CD4-positive, alpha-beta memory T cell (primary cell): ENCODE measurements at regions of chr4 and their contacts with region 1.

Region 1: GRCh38 chr4:13627606-13628301 is at the start of gene BOD1L1:
- DNase-seq: peak; percentile 71 to 83 (median 78)
- H3K4me3 ChIP-seq: peak within 1 kb of the TSS; percentile 70 to 95
- H3K4me3 Mint-ChIP-seq: peak within 1 kb of the TSS; percentile 94 to 98 (median 97)
- H3K27ac ChIP-seq: peak within 1 kb of the TSS; percentile 81
- H3K27ac Mint-ChIP-seq: peak within 1 kb of the TSS; percentile 93 to 99 (median 98)
- H3K4me1 ChIP-seq: peaks cover 41% of the 10 kb centered on the region
- H3K4me1 Mint-ChIP-seq: peaks cover 30 to 57% (median 46%) of the 10 kb centered on the region in 4 donors
- H3K27me3 ChIP-seq: no peaks in the 10 kb centered on the region
- H3K27me3 Mint-ChIP-seq: no peaks in the 10 kb centered on the region
- total RNA-seq, gene BOD1L1: 67.8 to 72.3 TPM

Region 2: DNA sequence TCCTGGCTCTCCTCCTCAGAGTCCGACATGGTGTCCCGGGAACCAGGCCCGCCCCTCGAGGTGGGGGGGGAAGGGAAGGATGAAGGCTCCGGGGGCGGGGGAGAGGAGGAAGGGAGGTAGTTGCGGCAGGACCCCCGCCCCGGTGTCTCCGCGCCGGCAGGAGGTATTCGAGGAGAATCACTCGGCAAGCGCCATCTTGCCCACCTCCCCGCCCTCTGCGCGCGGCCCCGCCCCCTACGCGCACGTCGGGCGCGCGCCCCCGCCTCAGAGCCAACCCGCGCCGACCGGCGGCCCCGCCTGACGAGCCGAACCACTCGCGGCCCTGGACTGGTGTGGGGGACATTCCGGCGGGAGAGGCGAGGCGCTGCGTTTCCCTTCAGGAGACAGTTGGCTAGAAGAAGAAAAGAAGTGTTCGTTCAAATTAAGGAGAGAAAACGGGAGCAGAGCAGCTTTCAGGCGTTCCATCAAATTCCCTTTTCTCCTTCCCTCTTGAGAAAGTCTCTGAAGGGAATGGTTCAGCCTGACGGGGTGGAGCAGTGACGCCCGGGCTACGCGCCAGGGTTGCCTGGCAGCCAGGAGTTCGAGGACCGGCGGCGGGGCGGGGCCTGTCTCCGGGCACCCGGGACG is 143.5 kb before region 1 on chr4 and contains the start of gene RAB28:
- CTCF ChIA-PET with region 1: no interaction called
- POLR2A ChIA-PET with region 1: interaction called, 3 read pairs
- intact Hi-C with region 1: loop called (anchors 1 kb)
- DNase-seq: peak; percentile 95 to 97 (median 96)
- H3K4me3 ChIP-seq: peak within 1 kb of the TSS; percentile 77 to 81
- H3K4me3 Mint-ChIP-seq: peak within 1 kb of the TSS; percentile 73 to 96 (median 90)
- H3K27ac ChIP-seq: peak within 1 kb of the TSS; percentile 93
- H3K27ac Mint-ChIP-seq: peak within 1 kb of the TSS; percentile 85 to 99 (median 99)
- H3K4me1 ChIP-seq: peaks cover 19% of the 10 kb centered on the region
- H3K4me1 Mint-ChIP-seq: peaks cover 14 to 27% (median 22%) of the 10 kb centered on the region in 4 donors
- H3K27me3 ChIP-seq: no peaks in the 10 kb centered on the region
- H3K27me3 Mint-ChIP-seq: peaks cover 12 to 14% of the 10 kb centered on the region in 2 donors
- total RNA-seq, gene RAB28: 13.3 to 14.0 TPM

Region 3: GRCh38 chr4:13559413-13559812 is 68.3 kb before region 1 on chr4:
- CTCF ChIA-PET with region 1: no interaction called
- POLR2A ChIA-PET with region 1: no interaction called
- intact Hi-C with region 1: no loop called
- DNase-seq: no peak
- H3K4me3 ChIP-seq: no peak overlapping the region
- H3K4me3 Mint-ChIP-seq: no peak overlapping the region
- H3K27ac ChIP-seq: no peak overlapping the region
- H3K27ac Mint-ChIP-seq: peak overlapping the region in 1 of 7 donors; percentile 54
- H3K4me1 ChIP-seq: no peaks in the 10 kb centered on the region
- H3K4me1 Mint-ChIP-seq: no peaks in the 10 kb centered on the region
- H3K27me3 ChIP-seq: no peaks in the 10 kb centered on the region
- H3K27me3 Mint-ChIP-seq: peaks cover 9 to 11% of the 10 kb centered on the region in 2 donors